Transverse colon (tissue), 4 donors: ENCODE measurements at regions of chr2 and their contacts with region 1.

Region 1: GRCh38 chr2:185583062-185583816 is 155.4 kb upstream of the FSIP2 start:
- DNase-seq: no peak
- H3K4me3 ChIP-seq: no peak overlapping the region
- H3K27ac ChIP-seq: no peak overlapping the region
- H3K4me1 ChIP-seq: no peaks in the 10 kb centered on the region
- H3K27me3 ChIP-seq: no peaks in the 10 kb centered on the region
- CTCF ChIP-seq: no peak
- EP300 ChIP-seq: no peak
- POLR2A ChIP-seq: no peak

Region 2: GRCh38 chr2:185531721-185532120 is 51.5 kb before region 1 on chr2:
- in situ Hi-C with region 1: no loop called
- intact Hi-C with region 1: no loop called
- DNase-seq: no peak
- H3K4me3 ChIP-seq: no peak overlapping the region
- H3K27ac ChIP-seq: no peak overlapping the region
- H3K4me1 ChIP-seq: no peaks in the 10 kb centered on the region
- H3K27me3 ChIP-seq: no peaks in the 10 kb centered on the region
- CTCF ChIP-seq: no peak
- EP300 ChIP-seq: no peak
- POLR2A ChIP-seq: no peak

Region 3: DNA sequence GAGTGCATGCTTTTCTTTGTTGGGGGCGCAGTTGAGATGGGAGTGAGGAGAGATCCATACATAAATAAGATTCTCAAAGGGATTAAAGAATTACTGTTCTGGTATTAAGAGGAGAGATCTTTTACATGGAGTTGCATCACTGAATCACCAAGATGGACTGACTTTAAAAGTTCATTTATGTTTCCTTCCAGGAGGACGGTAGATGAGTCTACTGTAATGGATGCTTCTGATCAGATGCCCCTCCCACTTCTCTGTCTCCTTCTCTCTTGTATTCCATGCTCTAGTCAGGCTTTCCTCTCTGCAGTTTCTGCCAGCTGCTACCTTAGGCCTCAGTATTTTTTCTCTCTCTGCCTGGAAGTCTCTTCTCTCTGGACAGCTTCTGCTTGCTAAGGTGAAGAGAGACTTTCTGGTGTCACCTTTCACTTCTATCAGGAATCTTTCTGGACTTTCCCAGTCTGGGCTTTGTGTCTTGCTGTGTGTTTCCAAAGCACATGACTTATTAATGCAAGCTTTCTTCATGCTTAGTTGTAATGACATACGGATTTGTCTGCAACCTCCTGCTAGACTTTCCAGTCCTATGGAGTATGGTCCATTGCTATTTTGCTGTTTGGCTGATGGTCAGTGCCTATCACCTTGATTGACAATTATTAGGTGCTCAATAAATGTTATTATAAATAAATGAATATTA is 1134.2 kb after region 1 on chr2:
- in situ Hi-C with region 1: no loop called
- intact Hi-C with region 1: no loop called
- DNase-seq: no peak
- H3K4me3 ChIP-seq: no peak overlapping the region
- H3K27ac ChIP-seq: no peak overlapping the region
- H3K4me1 ChIP-seq: no peaks in the 10 kb centered on the region
- H3K27me3 ChIP-seq: no peaks in the 10 kb centered on the region
- CTCF ChIP-seq: no peak
- EP300 ChIP-seq: no peak
- POLR2A ChIP-seq: no peak

Region 4: DNA sequence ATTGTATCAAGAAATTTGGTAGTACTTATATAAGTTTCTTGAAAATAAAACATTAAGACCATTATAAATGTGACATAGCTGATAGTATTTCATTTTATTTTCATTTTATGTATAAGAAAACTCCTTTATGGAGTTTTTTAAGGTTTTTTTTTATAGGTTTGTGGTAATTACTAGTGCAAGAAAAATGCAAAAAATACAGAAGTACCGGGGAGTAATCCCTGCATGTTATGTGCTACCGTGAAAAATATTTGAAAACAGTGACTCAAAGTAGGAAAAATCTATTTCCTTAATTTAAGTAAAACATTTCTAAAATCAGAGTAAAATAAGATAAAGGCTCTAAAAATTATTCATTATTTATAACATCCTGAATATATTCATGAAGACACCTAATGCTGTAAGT is 1244.2 kb after region 1 on chr2:
- in situ Hi-C with region 1: no loop called
- intact Hi-C with region 1: loop called (anchors 5 kb)
- DNase-seq: no peak
- H3K4me3 ChIP-seq: no peak overlapping the region
- H3K27ac ChIP-seq: no peak overlapping the region
- H3K4me1 ChIP-seq: no peaks in the 10 kb centered on the region
- H3K27me3 ChIP-seq: no peaks in the 10 kb centered on the region
- CTCF ChIP-seq: no peak
- EP300 ChIP-seq: no peak
- POLR2A ChIP-seq: no peak